Activated CD4-positive, alpha-beta T cell treated with anti-CD3 and anti-CD28 coated beads for 36 hours (primary cell): ENCODE measurements at regions of chr5 and their contacts with region 1.

Region 1: DNA sequence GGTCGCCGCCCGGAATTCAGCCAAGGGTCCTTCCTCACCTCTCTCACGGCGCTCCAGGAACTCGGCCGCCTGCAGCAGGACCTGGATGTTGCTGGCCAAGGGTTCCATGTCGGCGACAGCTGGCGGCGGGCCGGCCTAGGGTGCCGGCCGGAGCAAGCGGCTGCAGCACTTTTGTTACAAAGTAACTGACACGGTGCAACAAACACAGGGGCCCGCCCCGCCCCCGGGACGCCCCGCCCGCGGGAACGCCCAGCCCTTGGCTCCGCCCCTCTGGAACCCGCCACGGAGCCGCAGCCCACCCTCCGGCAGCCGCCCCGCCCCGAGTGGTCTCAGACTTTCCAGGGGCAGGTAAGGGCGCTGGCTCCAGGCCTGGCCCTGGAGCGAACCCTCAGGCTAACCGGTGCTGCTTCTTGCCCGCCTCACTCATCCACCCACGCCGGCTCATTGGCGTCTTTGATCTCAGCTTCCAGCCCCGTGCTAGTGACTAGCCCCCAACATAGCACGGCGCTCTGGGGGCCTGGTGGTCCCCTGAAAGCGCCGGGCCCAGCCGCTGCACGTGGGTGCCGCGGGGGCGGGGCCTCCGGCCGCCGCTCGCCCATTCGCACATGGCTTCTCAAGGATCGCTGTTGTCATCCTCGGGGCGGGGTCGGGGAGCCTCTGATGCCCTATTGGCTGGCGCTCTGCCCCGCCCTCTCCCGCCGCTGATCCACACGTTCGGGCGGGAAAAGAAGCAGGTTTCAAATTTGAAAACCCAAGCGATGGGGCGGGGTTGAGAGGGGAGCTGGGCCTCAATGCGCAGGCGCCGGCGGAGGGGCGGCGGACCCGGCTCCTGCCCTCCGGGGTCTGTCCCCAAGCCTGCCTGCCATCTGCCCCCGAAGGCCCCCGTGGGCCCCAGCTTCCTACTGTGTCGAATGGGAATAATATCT is at the start of gene MXD3:
- DNase-seq: peak; percentile 99
- ATAC-seq: peak; percentile 88
- H3K4me3 Mint-ChIP-seq: peak within 1 kb of the TSS; percentile 85
- H3K27ac Mint-ChIP-seq: peak within 1 kb of the TSS; percentile 84
- H3K4me1 Mint-ChIP-seq: peaks cover 28% of the 10 kb centered on the region
- H3K27me3 Mint-ChIP-seq: no peaks in the 10 kb centered on the region
- total RNA-seq, gene MXD3: 21.3 to 27.2 TPM

Region 2: GRCh38 chr5:177086924-177087706 is 224.9 kb before region 1 on chr5:
- CTCF ChIA-PET with region 1: no interaction called
- POLR2A ChIA-PET with region 1: no interaction called
- intact Hi-C with region 1: loop called in 1 of 2 experiments (anchors 1 kb)
- DNase-seq: peak; percentile 78
- ATAC-seq: peak; percentile 86
- H3K4me3 Mint-ChIP-seq: peak overlapping the region; percentile 13
- H3K27ac Mint-ChIP-seq: no peak overlapping the region
- H3K4me1 Mint-ChIP-seq: peaks cover 2% of the 10 kb centered on the region
- H3K27me3 Mint-ChIP-seq: peaks cover 18% of the 10 kb centered on the region

Region 3: GRCh38 chr5:177362610-177363507 is 50.9 kb after region 1 on chr5:
- CTCF ChIA-PET with region 1: interaction called, 9 read pairs
- POLR2A ChIA-PET with region 1: no interaction called
- intact Hi-C with region 1: loop called in 1 of 2 experiments (anchors 1 kb)
- DNase-seq: peak; percentile 84
- ATAC-seq: peak; percentile 68
- H3K4me3 Mint-ChIP-seq: peak overlapping the region; percentile 67
- H3K27ac Mint-ChIP-seq: peak overlapping the region; percentile 82
- H3K4me1 Mint-ChIP-seq: peaks cover 74% of the 10 kb centered on the region
- H3K27me3 Mint-ChIP-seq: no peaks in the 10 kb centered on the region

Region 4: GRCh38 chr5:177446200-177447065 is 134.4 kb after region 1 on chr5 and contains the start of gene PRR7:
- CTCF ChIA-PET with region 1: interaction called, 11 read pairs
- POLR2A ChIA-PET with region 1: interaction called, 6 read pairs
- intact Hi-C with region 1: no loop called
- DNase-seq: peak; percentile 83
- ATAC-seq: peak; percentile 54
- H3K4me3 Mint-ChIP-seq: peak within 1 kb of the TSS; percentile 51
- H3K27ac Mint-ChIP-seq: peak within 1 kb of the TSS; percentile 89
- H3K4me1 Mint-ChIP-seq: peaks cover 43% of the 10 kb centered on the region
- H3K27me3 Mint-ChIP-seq: no peaks in the 10 kb centered on the region
- total RNA-seq, gene PRR7: 12.3 to 13.0 TPM

Region 5: DNA sequence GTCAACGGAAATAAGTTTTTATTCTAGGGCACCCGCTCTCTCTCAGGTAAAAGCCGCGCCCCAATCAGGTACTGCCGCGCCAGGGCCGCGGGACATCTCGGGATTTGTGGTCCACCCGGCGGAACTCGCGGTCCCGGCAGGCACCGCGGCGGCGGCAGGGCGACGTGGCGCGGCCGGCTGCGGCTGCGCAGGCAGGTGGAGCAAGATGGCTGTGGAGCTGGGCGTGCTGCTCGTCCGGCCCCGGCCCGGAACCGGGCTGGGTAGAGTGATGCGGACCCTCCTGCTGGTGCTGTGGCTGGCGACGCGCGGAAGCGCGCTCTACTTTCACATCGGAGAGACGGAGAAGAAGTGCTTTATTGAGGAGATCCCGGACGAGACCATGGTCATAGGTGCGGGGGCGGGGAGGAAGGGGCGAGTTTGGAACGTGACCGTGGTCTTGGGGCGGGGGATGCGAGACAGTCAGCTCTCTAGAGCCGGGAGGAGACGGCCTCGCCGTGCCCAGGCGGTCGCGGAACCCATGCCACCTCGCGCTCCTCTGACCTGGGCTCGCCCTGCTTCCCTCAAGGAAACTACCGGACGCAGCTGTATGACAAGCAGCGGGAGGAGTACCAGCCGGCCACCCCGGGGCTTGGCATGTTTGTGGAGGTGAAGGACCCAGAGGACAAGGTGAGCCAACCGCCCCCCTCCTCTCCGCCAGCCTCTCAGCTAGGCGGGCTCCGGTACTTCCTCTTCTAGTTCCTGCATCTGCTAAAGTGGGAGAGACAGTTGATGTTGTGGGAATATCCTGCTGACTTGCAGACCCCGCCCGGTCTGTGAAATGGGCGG is 280.2 kb after region 1 on chr5 and contains the start of gene TMED9:
- CTCF ChIA-PET with region 1: no interaction called
- POLR2A ChIA-PET with region 1: no interaction called
- intact Hi-C with region 1: loop called in 1 of 2 experiments (anchors 10 kb)
- DNase-seq: peak; percentile 94
- ATAC-seq: peak; percentile 97
- H3K4me3 Mint-ChIP-seq: peak within 1 kb of the TSS; percentile 98
- H3K27ac Mint-ChIP-seq: peak within 1 kb of the TSS; percentile 99
- H3K4me1 Mint-ChIP-seq: peaks cover 29% of the 10 kb centered on the region
- H3K27me3 Mint-ChIP-seq: peaks cover 5% of the 10 kb centered on the region
- total RNA-seq, gene TMED9: 83.2 to 109 TPM